ENCODE measurements at regions of chr20 and their contacts with region 1.

Region 1: DNA sequence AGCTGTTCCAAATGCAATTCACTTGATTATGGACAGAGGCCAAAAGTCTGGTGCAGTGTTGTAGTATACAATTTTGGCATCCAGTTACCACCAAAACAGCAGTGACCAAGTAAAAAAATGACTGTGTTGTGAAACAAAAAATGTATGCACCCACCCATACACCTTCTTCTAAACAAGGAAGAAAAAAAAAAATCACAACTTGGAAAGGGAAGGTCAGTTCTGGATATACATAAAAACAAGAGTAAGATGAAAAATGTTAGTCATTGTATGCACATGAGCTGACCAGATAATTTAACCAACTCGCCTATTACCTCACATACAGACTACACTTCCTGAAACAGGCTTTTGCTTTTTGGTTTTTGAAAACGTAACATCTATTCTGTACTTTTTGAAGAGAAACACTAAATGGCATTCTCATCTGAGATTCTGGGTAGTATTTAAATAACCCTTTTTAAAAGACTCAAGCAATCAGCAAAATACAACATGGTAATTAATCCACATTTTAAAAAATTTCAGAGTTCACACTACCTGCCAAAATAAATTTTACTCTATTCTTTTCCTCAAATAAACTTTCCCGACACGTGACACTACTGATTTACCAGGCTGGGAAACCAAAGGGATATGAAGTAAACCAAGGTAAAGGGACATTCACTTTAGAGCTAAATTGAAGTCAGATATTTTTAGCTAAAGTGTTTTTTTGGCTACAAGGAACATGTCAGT is 141.6 kb upstream of the SHLD1 start:
- DNase-seq: no peak
- ATAC-seq: no peak
- H3K4me3 ChIP-seq: peak overlapping the region; percentile 88
- H3K27ac ChIP-seq: peak overlapping the region; percentile 89
- H3K4me1 ChIP-seq: peaks cover 19% of the 10 kb centered on the region
- H3K27me3 ChIP-seq: no peaks in the 10 kb centered on the region
- CTCF ChIP-seq: no peak

Region 2: GRCh38 chr20:5770987-5771318 is 162.4 kb after region 1 on chr20:
- intact Hi-C with region 1: loop called in 1 of 2 experiments (anchors 5 kb)
- DNase-seq: no peak
- ATAC-seq: no peak
- H3K4me3 ChIP-seq: no peak overlapping the region
- H3K27ac ChIP-seq: no peak overlapping the region
- H3K4me1 ChIP-seq: peaks cover 6% of the 10 kb centered on the region
- H3K27me3 ChIP-seq: no peaks in the 10 kb centered on the region
- CTCF ChIP-seq: no peak

Measured in psoas muscle (tissue), 8 donors.